Heart left ventricle (tissue), 16 donors: ENCODE measurements at regions of chr2 and their contacts with region 1.

Region 1: DNA sequence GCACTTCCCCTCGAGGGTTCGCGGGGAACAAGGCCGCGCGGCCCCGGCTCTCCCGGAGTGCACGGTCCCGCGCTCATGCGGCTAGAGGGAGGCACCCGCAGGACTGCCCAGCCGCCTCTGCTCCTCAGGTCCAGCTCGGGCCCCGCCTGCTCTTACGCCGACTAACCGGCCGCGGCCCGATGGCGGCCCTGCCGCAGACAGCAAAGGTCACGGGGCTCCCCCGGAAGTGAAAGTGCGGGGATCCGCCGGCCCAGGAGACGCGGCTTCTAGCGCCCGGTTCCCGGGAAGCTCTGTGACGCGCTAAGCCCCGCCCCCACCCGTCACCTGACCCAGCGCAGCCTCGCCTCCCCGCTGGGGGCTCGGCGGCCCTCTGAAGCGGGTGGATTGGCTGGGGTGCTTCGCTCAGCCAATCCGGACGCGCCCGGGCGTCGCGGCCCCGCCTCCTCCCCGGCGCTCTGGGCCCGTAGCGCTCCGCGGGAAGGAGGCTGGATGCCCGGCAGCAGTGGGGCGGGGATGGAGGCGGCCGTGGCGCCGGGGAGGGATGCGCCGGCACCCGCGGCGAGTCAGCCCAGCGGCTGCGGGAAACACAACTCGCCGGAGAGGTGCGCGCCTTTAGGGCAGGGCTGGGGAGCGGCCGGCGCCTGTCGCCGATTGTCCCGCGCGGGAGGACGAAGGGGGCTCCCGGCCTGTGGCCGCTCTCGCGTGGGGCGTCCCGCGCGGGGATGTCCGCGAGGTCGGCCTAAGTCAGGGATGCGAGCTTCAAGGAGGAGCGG is at the start of gene SCLY:
- DNase-seq: peak; percentile 98 to 99 (median 98)
- ATAC-seq: peak; percentile 99 to 100 (median 100)
- H3K4me3 ChIP-seq: peak within 1 kb of the TSS; percentile 64 to 95 (median 88)
- H3K27ac ChIP-seq: peak within 1 kb of the TSS; percentile 70 to 95 (median 88)
- H3K4me1 ChIP-seq: peaks cover 0 to 22% (median 14%) of the 10 kb centered on the region in 12 donors
- H3K27me3 ChIP-seq: no peaks in the 10 kb centered on the region
- CTCF ChIP-seq: no peak
- POLR2A ChIP-seq: peak; percentile 86 to 88
- total RNA-seq, gene SCLY: 8.1 to 14.3 (median 10.6) TPM

Region 2: GRCh38 chr2:237966565-237967462 is 93.9 kb before region 1 on chr2 and contains the start of gene UBE2F:
- intact Hi-C with region 1: loop called in 5 of 10 experiments (anchors 2 to 10 kb)
- DNase-seq: peak; percentile 97 to 99 (median 98)
- ATAC-seq: peak; percentile 97 to 98 (median 98)
- H3K4me3 ChIP-seq: peak within 1 kb of the TSS; percentile 62 to 94 (median 72)
- H3K27ac ChIP-seq: peak within 1 kb of the TSS in 11 of 12 donors; percentile 51 to 88 (median 77)
- H3K4me1 ChIP-seq: peaks cover 4 to 44% (median 29%) of the 10 kb centered on the region in 12 donors
- H3K27me3 ChIP-seq: no peaks in the 10 kb centered on the region
- CTCF ChIP-seq: no peak
- POLR2A ChIP-seq: peak in 1 of 2 donors; percentile 84
- total RNA-seq, gene UBE2F: 54.2 to 73.8 (median 60.6) TPM

Region 3: GRCh38 chr2:238042849-238043584 is 17.7 kb before region 1 on chr2:
- intact Hi-C with region 1: no loop called
- DNase-seq: peak in 1 of 5 donors; percentile 42
- ATAC-seq: peak; percentile 22 to 70 (median 54)
- H3K4me3 ChIP-seq: no peak overlapping the region
- H3K27ac ChIP-seq: no peak overlapping the region
- H3K4me1 ChIP-seq: peaks cover 0 to 7% (median 0%) of the 10 kb centered on the region in 12 donors
- H3K27me3 ChIP-seq: no peaks in the 10 kb centered on the region
- CTCF ChIP-seq: no peak
- POLR2A ChIP-seq: no peak

Region 4: DNA sequence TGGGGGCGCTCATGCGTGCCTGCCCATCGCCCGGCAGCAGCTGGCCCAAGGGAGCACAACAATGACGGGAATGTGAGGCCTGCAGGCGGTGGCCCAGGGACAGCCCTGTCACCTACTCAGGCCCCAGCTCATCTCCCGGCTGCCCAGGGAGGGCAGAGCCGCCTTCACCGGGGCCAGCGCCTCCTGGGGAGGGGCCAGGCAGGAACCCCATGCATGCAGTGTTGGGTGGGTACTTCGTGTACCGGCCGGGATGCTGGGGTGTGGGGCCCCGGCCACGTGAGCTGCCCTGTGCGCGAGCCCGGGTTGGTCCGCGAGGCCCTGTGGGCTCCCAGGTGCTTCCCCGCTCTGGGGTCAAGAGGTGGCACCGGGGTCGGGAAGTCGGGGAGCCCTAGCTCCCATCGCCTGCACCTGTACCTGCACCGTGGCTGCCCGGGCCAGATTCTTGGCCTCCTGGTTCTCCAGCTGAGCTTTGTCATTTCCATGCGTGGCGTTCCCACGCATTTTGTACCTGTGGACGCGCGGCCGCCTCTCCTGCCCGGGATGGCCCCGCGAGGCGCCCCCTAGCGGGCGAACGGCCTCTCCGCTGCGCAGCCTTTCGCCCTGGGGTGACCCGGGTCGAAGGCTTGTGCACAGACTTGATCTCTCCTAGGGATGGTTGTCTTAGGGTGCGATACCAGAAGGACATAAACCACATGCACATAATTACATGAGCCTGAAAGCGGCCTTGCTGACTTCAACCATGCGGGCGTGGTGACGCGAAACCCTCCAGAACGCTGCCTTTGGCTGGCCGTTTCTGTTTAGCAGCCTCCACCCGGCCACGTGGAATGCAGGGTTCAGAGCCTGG is 78.7 kb after region 1 on chr2:
- intact Hi-C with region 1: loop called in 1 of 10 experiments (anchors 5 kb)
- DNase-seq: peak in 1 of 5 donors; percentile 55
- ATAC-seq: peak; percentile 27 to 51 (median 40)
- H3K4me3 ChIP-seq: peak overlapping the region in 11 of 12 donors; percentile 22 to 56 (median 45)
- H3K27ac ChIP-seq: peak overlapping the region; percentile 73 to 96 (median 86)
- H3K4me1 ChIP-seq: peaks cover 0 to 65% (median 32%) of the 10 kb centered on the region in 12 donors
- H3K27me3 ChIP-seq: no peaks in the 10 kb centered on the region
- CTCF ChIP-seq: peak in 11 of 12 donors; percentile 52 to 74 (median 62)
- POLR2A ChIP-seq: no peak

Region 5: GRCh38 chr2:238288650-238289573 is 228.2 kb after region 1 on chr2:
- intact Hi-C with region 1: loop called in 1 of 10 experiments (anchors 10 kb)
- DNase-seq: peak; percentile 96 to 99 (median 98)
- ATAC-seq: peak; percentile 85 to 90 (median 89)
- H3K4me3 ChIP-seq: peak overlapping the region; percentile 28 to 99 (median 86)
- H3K27ac ChIP-seq: peak overlapping the region; percentile 14 to 98 (median 88)
- H3K4me1 ChIP-seq: peaks cover 4 to 57% (median 43%) of the 10 kb centered on the region in 12 donors
- H3K27me3 ChIP-seq: no peaks in the 10 kb centered on the region
- CTCF ChIP-seq: peak in 7 of 12 donors; percentile 26 to 60 (median 43)
- POLR2A ChIP-seq: peak; percentile 25 to 41